ENCODE measurements at regions of chr22 and their contacts with region 1.

Region 1: GRCh38 chr22:22855617-22856308 is 31.9 kb upstream of the IGLL5 start:
- DNase-seq: peak; percentile 64
- ATAC-seq: peak; percentile 92
- H3K4me3 Mint-ChIP-seq: no peak overlapping the region
- H3K27ac Mint-ChIP-seq: no peak overlapping the region
- H3K4me1 Mint-ChIP-seq: no peaks in the 10 kb centered on the region
- H3K27me3 Mint-ChIP-seq: peaks cover 86% of the 10 kb centered on the region
- CTCF ChIP-seq: peak; percentile 46; the same call in 1 of the 2 replicates

Region 2: DNA sequence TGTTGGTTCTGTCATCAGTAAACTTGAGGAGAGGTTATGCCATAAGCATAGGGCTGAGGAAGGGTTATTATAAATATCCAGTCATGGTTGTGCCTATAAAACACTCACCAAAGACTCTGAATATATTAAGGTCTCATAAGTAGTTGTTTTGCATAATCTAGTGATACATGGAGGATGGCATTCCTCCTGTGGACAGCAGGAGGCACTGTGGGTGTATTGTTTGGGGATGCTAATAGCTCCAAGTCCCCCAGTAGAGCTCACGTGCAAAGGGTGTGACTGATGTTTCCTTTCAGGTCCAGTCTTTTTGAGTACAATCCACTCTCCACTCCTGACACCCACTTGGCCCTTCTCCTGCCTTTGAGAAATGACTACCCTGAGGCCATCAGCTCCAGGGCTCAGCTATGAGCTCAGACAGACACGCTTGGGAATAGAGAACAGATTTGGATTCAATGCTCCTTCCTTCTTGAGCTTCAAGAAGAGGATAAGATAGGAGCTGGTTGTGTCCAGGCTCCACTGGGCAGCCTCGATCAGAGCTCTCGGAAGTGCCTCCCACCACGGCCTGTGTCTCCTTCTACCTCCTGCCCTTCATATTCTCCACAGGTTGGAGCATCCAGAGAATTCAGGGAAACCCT is 53.3 kb before region 1 on chr22:
- CTCF ChIA-PET with region 1: interaction called, 10 read pairs
- POLR2A ChIA-PET with region 1: no interaction called
- DNase-seq: no peak
- ATAC-seq: peak; percentile 62
- H3K4me3 Mint-ChIP-seq: no peak overlapping the region
- H3K27ac Mint-ChIP-seq: no peak overlapping the region
- H3K4me1 Mint-ChIP-seq: peaks cover 5% of the 10 kb centered on the region; the same call in 1 of the 2 replicates
- H3K27me3 Mint-ChIP-seq: peaks cover 94% of the 10 kb centered on the region
- CTCF ChIP-seq: no peak

Region 3: DNA sequence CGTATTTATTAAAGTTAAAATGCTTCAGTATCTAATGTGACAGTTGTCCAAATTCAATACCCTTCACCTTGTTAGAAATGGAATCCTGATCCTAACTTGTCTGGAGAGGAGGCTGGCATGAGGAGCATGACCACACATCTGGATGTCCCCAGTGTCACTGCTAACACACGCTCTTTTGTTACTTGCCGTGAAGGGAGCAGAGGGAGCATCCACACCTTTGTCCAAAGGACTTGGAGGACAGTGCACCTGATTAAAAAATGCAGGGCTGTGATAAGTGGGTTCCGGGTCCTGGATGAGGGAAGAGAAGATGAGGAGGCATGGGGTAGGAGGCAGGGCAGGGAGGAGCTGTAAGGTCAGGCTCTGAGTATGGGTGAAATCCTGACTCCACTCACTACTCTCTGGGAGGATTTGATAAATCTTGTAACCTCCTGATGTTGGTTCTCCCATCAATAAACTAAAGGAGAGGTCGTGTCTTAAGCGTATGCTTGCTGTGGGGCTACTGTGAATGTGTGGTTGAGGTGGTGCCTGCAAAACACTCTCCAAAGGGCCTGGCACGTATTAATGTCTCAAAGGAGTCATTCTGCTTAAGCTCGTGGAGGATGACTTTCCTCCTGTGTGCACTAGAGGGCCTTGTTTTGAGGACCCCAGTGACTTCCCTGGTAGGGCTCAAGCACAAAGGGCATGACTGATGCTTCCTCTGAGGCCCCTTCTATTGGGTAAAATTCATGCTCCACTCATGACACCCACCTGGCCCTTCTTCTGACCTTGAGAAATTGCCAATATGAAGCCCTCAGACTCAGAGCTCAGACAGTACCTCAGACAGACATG is 15.0 kb after region 1 on chr22:
- CTCF ChIA-PET with region 1: interaction called, 30 read pairs
- POLR2A ChIA-PET with region 1: no interaction called
- DNase-seq: no peak
- ATAC-seq: peak; percentile 89
- H3K4me3 Mint-ChIP-seq: no peak overlapping the region
- H3K27ac Mint-ChIP-seq: no peak overlapping the region
- H3K4me1 Mint-ChIP-seq: no peaks in the 10 kb centered on the region
- H3K27me3 Mint-ChIP-seq: peaks cover 89% of the 10 kb centered on the region
- CTCF ChIP-seq: peak; percentile 12; the same call in 1 of the 2 replicates

Region 4: GRCh38 chr22:22935546-22936157 is 79.9 kb after region 1 on chr22:
- CTCF ChIA-PET with region 1: interaction called, 19 read pairs
- POLR2A ChIA-PET with region 1: no interaction called
- DNase-seq: peak; percentile 33
- ATAC-seq: peak; percentile 81
- H3K4me3 Mint-ChIP-seq: no peak overlapping the region
- H3K27ac Mint-ChIP-seq: no peak overlapping the region
- H3K4me1 Mint-ChIP-seq: peaks cover 5% of the 10 kb centered on the region
- H3K27me3 Mint-ChIP-seq: peaks cover 47% of the 10 kb centered on the region
- CTCF ChIP-seq: no peak